ENCODE measurements at regions of chr22 and their contacts with region 1.

Region 1: DNA sequence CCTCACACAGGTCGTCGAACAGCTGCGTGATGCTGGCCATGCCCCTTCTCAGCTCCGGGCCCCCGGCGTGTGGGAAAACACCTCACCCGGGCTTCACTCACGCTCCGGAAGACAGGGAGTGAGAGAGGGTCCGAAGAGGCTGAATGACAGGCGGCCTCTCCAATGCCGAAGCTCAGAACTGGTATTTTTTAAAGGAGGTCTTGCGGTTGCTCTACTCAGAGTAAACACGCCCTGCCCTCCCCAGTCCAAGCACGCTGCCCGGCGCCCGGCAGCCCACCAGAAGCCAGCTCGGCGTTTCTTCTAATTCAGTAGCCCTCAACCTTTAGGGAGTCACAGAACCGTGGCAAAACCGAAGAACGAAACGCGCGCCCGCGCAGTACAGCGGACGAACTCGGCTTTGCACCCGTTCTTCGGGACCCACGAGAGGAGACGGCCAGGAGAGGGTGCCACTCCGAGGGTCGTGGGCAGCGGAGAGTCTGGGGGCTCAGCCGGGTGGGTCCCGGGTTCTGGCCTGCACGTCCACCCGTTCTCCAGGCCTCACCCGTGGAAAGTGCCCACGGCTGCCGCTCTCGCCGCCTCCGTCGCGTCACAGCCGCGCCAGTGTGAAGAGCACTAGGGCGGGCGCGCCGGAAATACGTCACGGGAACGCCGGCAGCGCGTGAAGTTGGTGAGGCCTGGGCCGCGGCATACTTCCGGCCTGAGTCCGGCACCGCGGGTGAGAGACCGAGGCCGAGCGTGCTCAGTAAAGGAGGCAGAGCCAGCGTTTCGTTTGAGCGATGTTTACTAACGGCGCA is at the start of gene TUBGCP6:
- DNase-seq: peak; percentile 99
- total RNA-seq, gene TUBGCP6: 20.6 to 23.4 TPM

Region 2: GRCh38 chr22:49960159-49961004 is 284.2 kb before region 1 on chr22 and contains the start of gene PIM3:
- intact Hi-C with region 1: loop called in 1 of 2 experiments (anchors 5 kb)
- DNase-seq: peak; percentile 97
- total RNA-seq, gene PIM3: 29.9 to 37.2 TPM

Region 3: GRCh38 chr22:50225200-50225969 is 19.2 kb before region 1 on chr22:
- intact Hi-C with region 1: no loop called
- DNase-seq: no peak

Region 4: GRCh38 chr22:50474668-50475492 is 230.3 kb after region 1 on chr22 and contains the start of gene SBF1:
- intact Hi-C with region 1: loop called in 1 of 2 experiments (anchors 10 kb)
- DNase-seq: peak; percentile 96
- total RNA-seq, gene SBF1: 58.5 to 83.8 TPM

Measured in posterior vena cava (tissue), 2 donors.